ENCODE measurements at regions of chr4 and their contacts with region 1.

Region 1: GRCh38 chr4:174387143-174387542 is 103.4 kb downstream of the CEP44 start:
- DNase-seq: no peak
- H3K4me3 ChIP-seq: no peak overlapping the region
- H3K27ac ChIP-seq: no peak overlapping the region
- H3K4me1 ChIP-seq: no peaks in the 10 kb centered on the region
- H3K27me3 ChIP-seq: no peaks in the 10 kb centered on the region
- CTCF ChIP-seq: no peak

Region 2: GRCh38 chr4:174425669-174426068 is 38.5 kb after region 1 on chr4:
- intact Hi-C with region 1: loop called (anchors 1 kb)
- DNase-seq: no peak
- H3K4me3 ChIP-seq: no peak overlapping the region
- H3K27ac ChIP-seq: no peak overlapping the region
- H3K4me1 ChIP-seq: no peaks in the 10 kb centered on the region
- H3K27me3 ChIP-seq: no peaks in the 10 kb centered on the region
- CTCF ChIP-seq: no peak

Region 3: GRCh38 chr4:174613979-174614378 is 226.8 kb after region 1 on chr4:
- intact Hi-C with region 1: no loop called
- DNase-seq: no peak
- H3K4me3 ChIP-seq: no peak overlapping the region
- H3K27ac ChIP-seq: no peak overlapping the region
- H3K4me1 ChIP-seq: no peaks in the 10 kb centered on the region
- H3K27me3 ChIP-seq: no peaks in the 10 kb centered on the region
- CTCF ChIP-seq: no peak

Measured in ascending aorta (tissue), 2 donors.